Spleen (tissue), 13 donors: ENCODE measurements at regions of chr1 and their contacts with region 1.

Region 1: GRCh38 chr1:44786138-44786840 is 1.7 kb downstream of the BEST4 start:
- DNase-seq: peak; percentile 94
- H3K4me3 ChIP-seq: peak overlapping the region; percentile 18 to 70 (median 48)
- H3K27ac ChIP-seq: peak overlapping the region; percentile 11 to 82 (median 72)
- H3K4me1 ChIP-seq: peaks cover 12 to 44% (median 40%) of the 10 kb centered on the region in 6 donors
- H3K27me3 ChIP-seq: no peaks in the 10 kb centered on the region
- CTCF ChIP-seq: peak; percentile 91 to 100 (median 98)
- POLR2A ChIP-seq: no peak

Region 2: GRCh38 chr1:44730741-44731512 is 55.4 kb before region 1 on chr1 and contains the start of gene RNU5D-1:
- intact Hi-C with region 1: loop called (anchors 10 kb)
- DNase-seq: peak; percentile 96
- H3K4me3 ChIP-seq: peak within 1 kb of the TSS in 5 of 8 donors; percentile 4 to 57 (median 18)
- H3K27ac ChIP-seq: peak within 1 kb of the TSS; percentile 85 to 97 (median 92)
- H3K4me1 ChIP-seq: peaks cover 14 to 40% (median 27%) of the 10 kb centered on the region in 6 donors
- H3K27me3 ChIP-seq: no peaks in the 10 kb centered on the region
- CTCF ChIP-seq: peak; percentile 65 to 97 (median 90)
- POLR2A ChIP-seq: peak; percentile 69 to 94 (median 70)
- total RNA-seq, gene RNU5D-1: not detected

Region 3: GRCh38 chr1:44819608-44820327 is 33.5 kb after region 1 on chr1:
- intact Hi-C with region 1: loop called (anchors 5 kb)
- DNase-seq: peak; percentile 94
- H3K4me3 ChIP-seq: peak overlapping the region; percentile 39 to 75 (median 48)
- H3K27ac ChIP-seq: peak overlapping the region; percentile 94 to 99 (median 97)
- H3K4me1 ChIP-seq: peaks cover 0 to 39% (median 30%) of the 10 kb centered on the region in 6 donors
- H3K27me3 ChIP-seq: no peaks in the 10 kb centered on the region
- CTCF ChIP-seq: peak in 5 of 11 experiments; percentile 4 to 39 (median 16)
- POLR2A ChIP-seq: peak in 2 of 3 donors; percentile 94 to 95